ENCODE measurements at regions of chr16 and their contacts with region 1.

Region 1: DNA sequence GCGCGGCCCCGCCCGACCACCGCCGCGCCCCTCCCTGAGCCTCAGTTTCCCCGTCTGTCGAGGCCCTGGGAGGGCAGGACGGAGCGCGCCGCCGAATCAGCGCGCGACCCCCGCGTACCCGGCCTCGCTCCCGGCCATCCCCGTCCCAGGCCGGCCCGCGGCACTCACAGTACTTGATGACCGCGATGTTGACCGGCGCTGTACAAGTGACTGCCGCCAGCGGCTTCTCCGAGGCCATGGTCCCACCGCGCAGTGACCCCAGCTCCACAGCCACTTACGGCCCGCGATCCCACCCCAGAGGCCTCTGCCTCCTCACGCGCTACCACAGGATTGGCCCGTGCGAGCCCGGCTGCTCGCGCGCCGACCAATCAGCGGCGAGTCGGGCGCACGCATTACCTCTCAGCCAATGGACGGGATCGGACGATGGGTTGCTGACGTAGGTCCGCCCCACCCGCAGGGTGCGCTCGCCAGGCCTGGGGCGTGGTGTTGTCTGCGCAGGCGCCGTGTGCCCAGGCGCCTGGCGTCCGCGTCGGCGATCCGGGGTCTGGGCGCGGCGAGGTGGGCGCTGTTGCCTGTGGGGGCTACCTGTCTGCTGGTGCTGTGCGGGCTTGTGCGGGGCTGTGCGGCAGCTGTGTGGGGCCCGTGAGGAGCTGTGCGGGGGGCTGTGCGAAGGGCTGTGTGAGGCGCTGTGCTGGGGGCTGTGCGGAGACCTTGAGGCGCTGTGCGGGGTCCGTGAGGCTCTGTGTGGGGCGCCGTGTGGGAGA is at the start of gene MVD:
- DNase-seq: peak; percentile 98
- ATAC-seq: peak; percentile 99
- total RNA-seq, gene MVD: 24.0 TPM

Region 2: DNA sequence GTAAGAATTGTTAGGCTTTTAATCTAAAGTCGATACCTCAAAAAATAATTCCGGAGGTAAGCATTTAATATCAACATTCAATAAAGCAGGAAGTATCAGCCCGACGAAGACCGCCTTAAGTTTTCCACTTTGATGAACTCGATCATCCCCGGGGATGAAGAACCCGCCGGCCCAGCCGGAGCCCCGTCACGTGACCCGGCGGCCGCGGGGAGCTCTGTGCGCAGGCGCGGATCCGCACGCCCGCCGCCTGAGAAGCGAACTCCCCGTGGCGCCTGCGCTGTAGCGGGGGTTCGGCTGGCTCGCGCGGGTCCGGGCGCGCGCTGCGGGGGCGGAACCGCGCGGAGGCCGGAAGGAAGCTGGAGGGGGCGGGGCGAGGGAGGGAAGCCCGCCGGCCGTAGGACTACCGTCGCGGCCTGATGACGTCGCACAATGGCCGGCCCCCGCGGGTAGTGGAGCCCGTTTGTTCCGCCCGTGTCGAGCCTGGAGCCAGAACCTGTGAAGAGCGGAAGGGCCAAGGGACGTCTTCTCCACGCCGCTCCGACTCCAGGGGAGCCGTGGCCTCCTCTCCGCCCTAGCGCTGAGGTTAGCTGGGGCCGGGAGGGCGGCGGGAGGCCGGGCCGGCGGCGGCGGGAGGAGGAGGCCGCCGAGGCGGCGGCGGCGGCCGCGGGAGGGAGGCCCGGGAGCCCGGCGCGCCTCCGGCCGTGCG is 92.9 kb before region 1 on chr16 and contains the start of gene ZC3H18:
- intact Hi-C with region 1: loop called (anchors 1 kb)
- DNase-seq: peak; percentile 98
- ATAC-seq: peak; percentile 99
- total RNA-seq, gene ZC3H18: 23.9 TPM

Region 3: DNA sequence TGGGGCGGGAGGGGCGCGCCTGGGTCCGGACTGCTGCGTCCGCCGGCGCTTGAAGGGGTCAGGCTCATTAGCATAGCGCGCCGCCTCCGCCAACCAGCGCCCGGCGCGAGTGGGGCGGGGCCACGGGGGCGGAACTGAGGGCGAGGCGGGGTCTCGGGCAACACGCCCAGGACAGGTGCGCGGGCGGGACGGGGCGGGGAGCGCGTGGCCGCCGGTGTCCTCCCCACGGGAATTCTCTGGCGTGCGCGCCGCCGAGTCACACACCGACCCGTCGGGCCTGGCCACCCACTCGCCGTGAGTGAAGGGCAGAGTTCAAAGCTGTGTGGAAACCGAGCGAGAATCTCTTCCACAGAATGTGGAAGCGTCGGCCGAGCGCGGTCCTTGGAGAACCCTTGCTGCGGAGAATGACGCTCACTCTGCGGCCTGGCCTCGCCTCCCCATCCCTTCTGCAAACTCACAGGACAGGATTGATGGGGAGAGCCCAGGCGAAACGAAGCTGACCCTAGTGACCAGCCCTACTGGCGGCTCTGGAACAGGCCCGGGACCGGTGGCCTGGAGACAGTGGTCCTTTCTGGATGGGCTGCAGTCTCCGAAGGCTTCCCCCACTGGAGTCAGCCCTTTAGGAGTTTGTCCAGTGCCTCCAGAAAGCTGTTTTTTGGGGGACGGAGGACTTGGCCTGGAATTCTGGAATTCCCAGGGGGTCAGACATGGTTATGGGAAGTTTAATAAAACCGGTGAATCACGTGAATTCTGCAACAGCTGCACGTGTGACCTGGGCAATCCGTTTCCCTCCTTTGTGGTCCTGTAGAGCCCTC is 23.6 kb after region 1 on chr16 and contains the start of gene SNAI3:
- intact Hi-C with region 1: no loop called
- DNase-seq: peak; percentile 94
- ATAC-seq: peak; percentile 91
- total RNA-seq, gene SNAI3: 2.9 TPM

Measured in Right ventricle myocardium inferior (tissue), 1 donor.